ENCODE measurements at regions of chr1 and their contacts with region 1.

Region 1: GRCh38 chr1:206544562-206545257 is 37.4 kb downstream of the RASSF5 start:
- DNase-seq: peak; percentile 74 to 92
- ATAC-seq: peak; percentile 72
- H3K4me3 ChIP-seq: no peak overlapping the region
- H3K27ac ChIP-seq: no peak overlapping the region
- H3K4me1 ChIP-seq: no peaks in the 10 kb centered on the region
- H3K27me3 ChIP-seq: no peaks in the 10 kb centered on the region

Region 2: DNA sequence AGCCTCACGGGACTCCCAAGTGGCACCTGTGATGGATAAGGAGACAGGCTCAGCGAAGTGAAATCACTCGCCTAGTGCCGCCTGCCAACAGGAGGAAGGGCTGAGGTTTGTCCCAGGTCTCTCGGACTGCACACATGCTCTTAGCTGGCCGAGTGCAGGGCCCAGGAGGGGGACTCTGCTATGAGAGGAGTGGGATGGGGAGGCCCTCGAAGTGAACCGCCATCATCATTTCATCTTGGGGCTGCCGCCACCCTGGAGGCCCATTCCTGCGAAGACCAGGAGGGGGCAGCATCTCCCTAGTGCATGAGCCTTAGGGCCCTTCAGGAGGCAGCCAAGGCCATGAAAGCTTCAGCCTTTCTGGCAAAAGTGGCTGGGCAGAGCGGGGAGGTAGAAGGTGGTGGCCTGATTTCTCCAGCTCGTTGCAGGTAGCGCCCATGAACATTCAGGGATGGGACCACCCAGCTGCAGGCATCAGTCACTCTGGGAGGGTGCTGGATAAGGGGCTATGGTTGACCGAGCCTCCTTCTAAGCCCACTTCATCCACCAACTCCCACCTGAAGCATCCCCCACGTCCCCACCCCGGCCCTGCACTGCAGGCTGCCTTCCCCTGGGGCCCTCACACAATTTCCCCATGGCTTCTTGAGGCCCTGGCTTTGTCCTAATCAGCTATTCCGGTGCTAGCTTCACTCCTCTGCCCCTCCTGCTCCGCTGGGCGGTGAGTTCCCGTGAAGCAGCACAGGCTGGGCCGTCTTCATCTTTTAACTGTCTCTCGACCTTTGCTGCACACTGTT is 54.5 kb before region 1 on chr1:
- intact Hi-C with region 1: loop called in 1 of 2 experiments (anchors 5 kb)
- DNase-seq: peak; percentile 80 to 93
- ATAC-seq: peak; percentile 88
- H3K4me3 ChIP-seq: no peak overlapping the region
- H3K27ac ChIP-seq: no peak overlapping the region
- H3K4me1 ChIP-seq: no peaks in the 10 kb centered on the region
- H3K27me3 ChIP-seq: no peaks in the 10 kb centered on the region

Region 3: DNA sequence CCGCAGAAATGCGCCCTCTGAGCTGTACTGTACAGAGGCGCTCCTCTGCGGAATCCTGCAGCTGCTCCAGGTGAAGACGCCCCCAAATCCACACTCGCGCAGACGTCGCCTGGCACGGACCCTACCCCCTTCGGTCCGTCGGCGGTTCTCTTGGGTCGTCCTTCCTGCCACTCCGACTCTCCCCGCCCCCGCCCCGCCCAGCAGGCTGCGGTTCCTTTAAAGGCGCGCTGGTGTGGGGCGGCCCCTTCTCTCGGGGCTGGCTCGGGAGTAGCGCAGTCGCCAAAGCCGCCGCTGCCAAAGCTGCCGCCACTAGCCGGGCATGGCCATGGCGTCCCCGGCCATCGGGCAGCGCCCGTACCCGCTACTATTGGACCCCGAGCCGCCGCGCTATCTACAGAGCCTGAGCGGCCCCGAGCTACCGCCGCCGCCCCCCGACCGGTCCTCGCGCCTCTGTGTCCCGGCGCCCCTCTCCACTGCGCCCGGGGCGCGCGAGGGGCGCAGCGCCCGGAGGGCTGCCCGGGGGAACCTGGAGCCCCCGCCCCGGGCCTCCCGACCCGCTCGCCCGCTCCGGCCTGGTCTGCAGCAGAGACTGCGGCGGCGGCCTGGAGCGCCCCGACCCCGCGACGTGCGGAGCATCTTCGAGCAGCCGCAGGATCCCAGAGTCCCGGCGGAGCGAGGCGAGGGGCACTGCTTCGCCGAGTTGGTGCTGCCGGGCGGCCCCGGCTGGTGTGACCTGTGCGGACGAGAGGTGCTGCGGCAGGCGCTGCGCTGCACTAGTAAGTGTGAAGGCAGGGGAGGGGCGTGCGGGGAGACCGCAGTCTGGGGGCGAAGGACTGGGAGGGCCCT is 37.2 kb before region 1 on chr1 and contains the start of gene RASSF5:
- intact Hi-C with region 1: loop called in 1 of 2 experiments (anchors 5 kb)
- DNase-seq: peak; percentile 92 to 96
- ATAC-seq: peak; percentile 87
- H3K4me3 ChIP-seq: peak within 1 kb of the TSS; percentile 48 to 90
- H3K27ac ChIP-seq: peak within 1 kb of the TSS in 1 of 2 donors; percentile 4
- H3K4me1 ChIP-seq: no peaks in the 10 kb centered on the region
- H3K27me3 ChIP-seq: no peaks in the 10 kb centered on the region
- total RNA-seq, gene RASSF5: 14.8 to 18.2 TPM

Region 4: DNA sequence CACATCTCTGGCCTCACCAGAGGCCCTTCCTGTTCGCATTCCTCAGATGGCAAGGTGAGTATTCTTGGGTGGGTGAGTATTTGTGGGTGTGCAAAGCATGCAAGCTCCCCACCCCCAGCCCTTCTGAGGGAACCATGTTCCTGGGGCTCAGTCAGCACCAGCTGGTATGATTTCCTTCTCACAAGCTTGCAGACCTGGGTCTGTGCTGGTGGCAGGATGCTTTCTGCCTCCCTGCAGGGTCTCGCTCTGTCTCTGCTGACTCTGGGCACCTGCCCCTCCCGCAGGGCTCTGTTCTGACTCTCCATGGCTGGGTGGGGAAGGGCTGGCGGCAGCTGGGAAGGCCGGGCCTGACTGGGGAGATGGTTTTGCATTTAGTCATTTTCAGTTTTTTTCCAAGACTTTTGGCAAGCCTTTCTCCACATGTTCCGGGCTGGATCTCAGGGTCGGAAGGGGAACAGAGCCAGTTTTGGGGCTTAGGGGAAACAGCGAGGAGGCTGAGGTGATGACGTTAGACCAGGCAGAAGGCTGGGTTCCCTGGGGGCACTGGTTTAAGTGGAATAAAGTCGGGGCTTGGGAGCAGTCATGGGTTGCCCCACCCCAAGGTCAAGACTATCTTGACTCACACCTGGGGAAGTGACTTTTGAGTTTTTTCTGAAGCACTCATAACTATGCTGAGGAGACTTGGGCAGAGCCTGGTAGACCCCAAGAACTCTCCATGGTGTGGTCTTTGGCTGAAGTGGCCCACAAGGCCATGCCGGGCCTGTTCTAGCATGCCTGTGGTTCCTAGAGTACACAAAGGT is 31.2 kb before region 1 on chr1:
- intact Hi-C with region 1: loop called (anchors 2 to 5 kb)
- DNase-seq: peak; percentile 90
- ATAC-seq: peak; percentile 81
- H3K4me3 ChIP-seq: no peak overlapping the region
- H3K27ac ChIP-seq: no peak overlapping the region
- H3K4me1 ChIP-seq: no peaks in the 10 kb centered on the region
- H3K27me3 ChIP-seq: no peaks in the 10 kb centered on the region

Region 5: GRCh38 chr1:206583707-206584648 is 39.3 kb after region 1 on chr1:
- intact Hi-C with region 1: loop called (anchors 2 to 5 kb)
- DNase-seq: peak; percentile 79 to 90
- ATAC-seq: peak; percentile 74
- H3K4me3 ChIP-seq: no peak overlapping the region
- H3K27ac ChIP-seq: no peak overlapping the region
- H3K4me1 ChIP-seq: no peaks in the 10 kb centered on the region
- H3K27me3 ChIP-seq: no peaks in the 10 kb centered on the region

Measured in aorta (tissue), 5 donors.